ENCODE measurements at regions of chr15 and their contacts with region 1.

Region 1: GRCh38 chr15:69475769-69476358 is 23.2 kb downstream of the RPLP1 start:
- DNase-seq: peak; percentile 87
- ATAC-seq: peak; percentile 97
- H3K4me3 ChIP-seq: no peak overlapping the region
- H3K27ac ChIP-seq: no peak overlapping the region
- H3K4me1 ChIP-seq: no peaks in the 10 kb centered on the region
- H3K27me3 ChIP-seq: no peaks in the 10 kb centered on the region
- CTCF ChIP-seq: peak; percentile 99

Region 2: GRCh38 chr15:70492240-70493177 is 1016.6 kb after region 1 on chr15:
- intact Hi-C with region 1: loop called (anchors 10 kb)
- DNase-seq: peak; percentile 81
- ATAC-seq: peak; percentile 84
- H3K4me3 ChIP-seq: no peak overlapping the region
- H3K27ac ChIP-seq: no peak overlapping the region
- H3K4me1 ChIP-seq: peaks cover 25% of the 10 kb centered on the region
- H3K27me3 ChIP-seq: no peaks in the 10 kb centered on the region
- CTCF ChIP-seq: no peak

Measured in upper lobe of right lung (tissue), 1 donor.